ENCODE measurements at regions of chr3 and their contacts with region 1.

Region 1: DNA sequence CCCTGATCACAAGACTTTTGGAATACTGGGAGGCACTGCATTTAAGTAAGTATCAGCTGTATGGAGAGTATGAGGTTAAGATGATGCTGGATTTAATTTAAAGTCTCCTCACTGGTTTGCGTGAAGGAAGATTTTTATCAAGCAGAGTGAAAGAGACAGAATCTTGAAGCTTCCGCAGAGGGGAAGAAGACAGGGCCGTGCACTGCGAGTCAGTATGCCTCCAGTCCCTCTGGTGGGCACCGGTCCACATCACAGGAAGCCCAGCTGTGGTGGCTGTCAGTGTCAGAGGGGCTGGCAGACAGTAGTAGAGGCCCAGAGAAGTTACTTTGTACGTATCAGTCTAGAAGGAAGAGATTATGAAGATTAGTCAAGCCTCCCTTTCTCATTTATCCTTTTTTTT is 379.0 kb upstream of the TPRG1 start:
- DNase-seq: no peak
- ATAC-seq: peak; percentile 70
- H3K4me3 Mint-ChIP-seq: no peak overlapping the region
- H3K27ac Mint-ChIP-seq: no peak overlapping the region
- H3K4me1 Mint-ChIP-seq: peaks cover 16% of the 10 kb centered on the region
- H3K27me3 Mint-ChIP-seq: no peaks in the 10 kb centered on the region
- CTCF ChIP-seq: no peak

Region 2: DNA sequence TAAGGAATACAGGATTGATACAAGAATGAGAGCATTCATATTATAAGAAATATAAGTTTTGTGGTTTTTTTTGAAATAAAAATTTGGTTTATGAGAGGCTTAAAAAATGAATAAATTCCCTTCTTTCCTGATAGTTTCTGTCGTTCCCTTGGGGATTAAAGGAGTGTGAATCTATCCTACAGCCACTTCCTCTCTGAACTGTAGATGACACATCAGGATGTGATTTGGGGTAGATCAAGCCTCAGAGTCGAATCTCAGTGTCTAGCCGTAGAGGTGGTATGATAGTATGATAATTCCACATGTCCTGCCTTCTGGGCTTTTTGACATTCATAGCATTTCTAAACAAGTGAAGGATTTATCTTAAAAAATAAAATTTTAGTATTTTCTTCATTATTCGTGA is 295.8 kb before region 1 on chr3:
- CTCF ChIA-PET with region 1: no interaction called
- POLR2A ChIA-PET with region 1: no interaction called
- intact Hi-C with region 1: no loop called
- DNase-seq: no peak
- ATAC-seq: no peak
- H3K4me3 Mint-ChIP-seq: no peak overlapping the region
- H3K27ac Mint-ChIP-seq: no peak overlapping the region
- H3K4me1 Mint-ChIP-seq: peaks cover 31% of the 10 kb centered on the region
- H3K27me3 Mint-ChIP-seq: no peaks in the 10 kb centered on the region
- CTCF ChIP-seq: no peak

Region 3: DNA sequence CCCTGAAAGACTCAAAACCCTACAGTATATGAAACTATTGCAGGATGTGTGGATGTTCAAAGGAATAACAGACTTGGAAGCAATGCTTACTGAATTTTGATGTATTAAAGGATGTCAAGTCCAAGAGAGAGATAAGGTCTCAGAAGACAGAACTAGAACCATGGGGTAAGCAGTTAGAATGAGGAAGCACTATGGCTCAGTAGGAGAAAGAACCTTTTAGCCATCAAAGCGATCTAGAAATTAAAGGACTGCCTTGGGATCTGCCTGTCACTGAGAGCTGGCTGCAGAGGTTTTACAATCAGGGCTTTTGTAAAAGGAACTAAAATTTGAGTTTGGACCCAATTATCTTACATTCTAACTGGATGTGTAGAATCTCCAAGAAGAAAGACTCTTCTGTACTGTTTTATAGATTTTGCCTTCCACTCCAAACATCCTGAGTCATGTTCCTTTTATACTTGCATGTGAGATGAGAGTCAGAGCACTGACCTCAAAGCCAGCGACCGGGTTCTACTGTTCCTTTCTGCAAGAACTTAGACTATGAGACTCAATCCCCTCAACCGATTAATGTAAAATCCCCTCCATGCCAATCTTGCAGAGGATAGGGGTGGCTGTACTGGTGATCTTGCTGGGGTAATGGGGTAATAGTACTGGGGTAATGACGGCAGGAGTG is 33.3 kb before region 1 on chr3:
- CTCF ChIA-PET with region 1: no interaction called
- POLR2A ChIA-PET with region 1: no interaction called
- intact Hi-C with region 1: loop called (anchors 5 kb)
- DNase-seq: no peak
- ATAC-seq: no peak
- H3K4me3 Mint-ChIP-seq: no peak overlapping the region
- H3K27ac Mint-ChIP-seq: no peak overlapping the region
- H3K4me1 Mint-ChIP-seq: peaks cover 28% of the 10 kb centered on the region
- H3K27me3 Mint-ChIP-seq: no peaks in the 10 kb centered on the region
- CTCF ChIP-seq: no peak